ENCODE measurements at regions of chr14 and their contacts with region 1.

Region 1: GRCh38 chr14:30443368-30444007 is 115.5 kb upstream of the G2E3 start:
- DNase-seq: no peak
- ATAC-seq: peak in 3 of 4 donors; percentile 64 to 83 (median 70)
- H3K4me3 ChIP-seq: no peak overlapping the region
- H3K27ac ChIP-seq: no peak overlapping the region
- H3K4me1 ChIP-seq: no peaks in the 10 kb centered on the region
- H3K27me3 ChIP-seq: no peaks in the 10 kb centered on the region
- CTCF ChIP-seq: peak; percentile 38 to 69 (median 59)
- POLR2A ChIP-seq: no peak

Region 2: GRCh38 chr14:30375296-30375892 is 68.1 kb before region 1 on chr14:
- intact Hi-C with region 1: loop called in 1 of 2 experiments (anchors 10 kb)
- DNase-seq: peak; percentile 68 to 73 (median 68)
- ATAC-seq: peak; percentile 95 to 100 (median 98)
- H3K4me3 ChIP-seq: no peak overlapping the region
- H3K27ac ChIP-seq: no peak overlapping the region
- H3K4me1 ChIP-seq: no peaks in the 10 kb centered on the region
- H3K27me3 ChIP-seq: no peaks in the 10 kb centered on the region
- CTCF ChIP-seq: peak; percentile 75 to 83 (median 80)
- POLR2A ChIP-seq: no peak

Measured in right lobe of liver (tissue), 6 donors.